ENCODE measurements at regions of chr2 and their contacts with region 1.

Region 1: DNA sequence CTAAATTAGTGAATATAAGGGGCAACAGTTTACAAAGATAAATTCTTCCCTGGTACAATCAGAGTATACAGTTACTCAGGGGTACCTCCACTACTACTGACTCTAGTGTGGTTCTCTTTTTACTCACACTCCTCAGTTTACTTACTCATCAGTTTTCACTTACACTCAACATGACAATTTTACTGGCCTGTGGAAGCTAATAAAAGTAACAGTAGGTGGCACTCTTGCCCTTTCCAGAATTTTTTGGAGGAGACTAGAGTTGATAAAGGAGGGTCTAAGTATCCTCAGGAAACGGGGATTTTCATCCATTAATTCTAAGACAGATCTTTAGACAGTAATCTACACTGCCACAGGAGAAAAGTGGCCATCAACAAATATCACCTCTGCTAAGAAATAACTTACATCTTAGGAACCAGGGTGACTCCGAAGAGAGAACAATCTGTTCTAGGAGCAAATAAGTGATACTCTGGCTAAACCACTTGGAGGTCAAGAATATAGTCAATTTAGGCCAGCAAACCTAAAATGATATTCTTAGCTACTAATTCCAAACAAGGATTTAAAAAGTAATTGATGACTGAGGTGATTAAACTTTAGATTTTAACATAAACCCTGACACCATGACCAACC is 61.3 kb downstream of the ATL2 start:
- H3K4me3 ChIP-seq: no peak overlapping the region
- H3K27ac ChIP-seq: no peak overlapping the region
- H3K4me1 ChIP-seq: peaks cover 3% of the 10 kb centered on the region; the same call in 1 of the 2 replicates
- CTCF ChIP-seq: no peak; the same call in 1 of the 2 replicates

Region 2: GRCh38 chr2:37877457-37878315 is 438.1 kb before region 1 on chr2:
- CTCF ChIA-PET with region 1: no interaction called
- POLR2A ChIA-PET with region 1: no interaction called
- H3K4me3 ChIP-seq: no peak overlapping the region
- H3K27ac ChIP-seq: no peak overlapping the region
- H3K4me1 ChIP-seq: no peaks in the 10 kb centered on the region
- CTCF ChIP-seq: peak; percentile 49

Region 3: DNA sequence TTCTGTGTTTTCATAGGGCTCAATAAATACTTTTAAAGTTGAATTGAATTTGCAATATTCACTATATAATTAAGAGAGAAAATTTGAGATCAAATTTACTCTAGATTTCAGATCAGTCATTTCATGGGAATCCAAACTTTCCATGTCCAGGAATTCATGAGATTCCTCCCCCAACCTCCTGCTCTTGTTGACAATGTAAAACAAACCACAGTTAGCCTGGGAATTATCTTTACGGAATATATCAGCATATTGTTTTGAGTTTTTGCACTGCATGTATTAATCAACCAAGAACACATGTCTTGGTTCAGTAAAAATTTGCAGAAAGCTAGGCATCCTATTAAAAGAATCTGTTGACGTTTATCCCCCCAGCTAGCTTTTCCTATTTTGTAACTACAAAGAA is 282.2 kb before region 1 on chr2:
- CTCF ChIA-PET with region 1: no interaction called
- POLR2A ChIA-PET with region 1: no interaction called
- H3K4me3 ChIP-seq: no peak overlapping the region
- H3K27ac ChIP-seq: no peak overlapping the region
- H3K4me1 ChIP-seq: no peaks in the 10 kb centered on the region; the same call in 1 of the 2 replicates
- CTCF ChIP-seq: no peak

Region 4: DNA sequence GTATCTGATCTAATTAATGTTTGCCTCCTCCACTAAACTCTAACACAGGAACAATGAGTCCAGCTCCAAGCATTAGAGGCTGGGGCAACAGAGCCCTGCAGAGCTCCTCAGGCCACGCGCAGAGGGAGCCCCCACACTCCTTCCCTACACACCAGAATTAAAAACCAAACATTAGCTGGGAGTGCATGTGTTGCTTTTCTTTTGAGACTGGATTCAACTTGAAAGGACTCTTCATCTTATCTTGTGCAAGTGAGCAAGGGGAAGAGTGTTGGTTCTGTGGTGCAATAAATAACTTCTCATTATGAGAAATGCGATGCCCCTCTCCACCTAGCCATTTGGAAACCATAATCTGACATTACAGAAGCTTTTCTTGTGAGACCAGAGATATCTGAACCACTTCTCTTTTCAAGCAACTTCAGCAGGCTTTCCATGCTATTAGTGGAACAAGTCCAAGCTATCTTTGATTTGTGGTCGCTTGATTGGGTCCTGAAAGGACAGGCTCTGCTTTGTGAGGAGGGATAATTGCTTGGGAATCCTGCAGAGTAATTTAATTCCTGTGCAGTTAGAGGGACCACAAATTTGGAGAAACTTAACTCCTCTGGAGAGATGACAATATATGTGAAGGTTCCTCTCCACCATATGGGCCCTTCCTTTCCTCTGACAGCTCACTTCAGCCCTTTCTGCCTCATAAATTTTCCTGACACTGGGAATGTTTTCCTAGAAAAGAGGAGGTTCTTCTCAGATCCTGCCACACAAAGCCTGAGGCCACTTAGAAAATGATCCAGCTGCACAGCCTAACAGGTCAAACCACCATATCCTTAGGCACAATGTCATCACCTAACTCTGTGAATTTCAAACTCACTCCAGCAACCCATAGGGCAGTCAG is 51.2 kb before region 1 on chr2:
- CTCF ChIA-PET with region 1: no interaction called
- POLR2A ChIA-PET with region 1: no interaction called
- H3K4me3 ChIP-seq: no peak overlapping the region
- H3K27ac ChIP-seq: peak overlapping the region; percentile 63
- H3K4me1 ChIP-seq: peaks cover 10% of the 10 kb centered on the region
- CTCF ChIP-seq: no peak

Region 5: DNA sequence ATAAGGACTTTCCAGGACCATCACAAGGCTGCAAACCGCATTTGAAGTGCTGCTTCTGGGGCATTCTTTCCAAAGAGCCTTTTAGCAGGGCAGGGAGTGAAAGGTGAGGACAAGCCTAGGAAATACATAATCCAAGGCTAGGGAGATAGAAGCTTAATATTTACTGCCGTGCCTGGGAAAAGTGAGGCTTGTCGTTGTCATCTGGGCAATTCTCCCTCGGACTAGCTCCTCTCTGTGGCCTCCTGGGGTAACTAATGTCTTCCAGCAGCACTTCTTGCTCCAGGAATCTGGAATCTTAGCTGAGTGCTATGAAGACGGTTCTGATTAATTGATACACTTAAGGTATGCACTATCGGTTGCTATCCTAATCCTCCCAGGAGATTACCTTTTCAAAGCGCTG is 130.6 kb after region 1 on chr2:
- CTCF ChIA-PET with region 1: interaction called, 12 read pairs
- POLR2A ChIA-PET with region 1: interaction called, 4 read pairs
- H3K4me3 ChIP-seq: no peak overlapping the region
- H3K27ac ChIP-seq: no peak overlapping the region
- H3K4me1 ChIP-seq: peaks cover 32% of the 10 kb centered on the region
- CTCF ChIP-seq: peak; percentile 10; the same call in 1 of the 2 replicates

Region 6: DNA sequence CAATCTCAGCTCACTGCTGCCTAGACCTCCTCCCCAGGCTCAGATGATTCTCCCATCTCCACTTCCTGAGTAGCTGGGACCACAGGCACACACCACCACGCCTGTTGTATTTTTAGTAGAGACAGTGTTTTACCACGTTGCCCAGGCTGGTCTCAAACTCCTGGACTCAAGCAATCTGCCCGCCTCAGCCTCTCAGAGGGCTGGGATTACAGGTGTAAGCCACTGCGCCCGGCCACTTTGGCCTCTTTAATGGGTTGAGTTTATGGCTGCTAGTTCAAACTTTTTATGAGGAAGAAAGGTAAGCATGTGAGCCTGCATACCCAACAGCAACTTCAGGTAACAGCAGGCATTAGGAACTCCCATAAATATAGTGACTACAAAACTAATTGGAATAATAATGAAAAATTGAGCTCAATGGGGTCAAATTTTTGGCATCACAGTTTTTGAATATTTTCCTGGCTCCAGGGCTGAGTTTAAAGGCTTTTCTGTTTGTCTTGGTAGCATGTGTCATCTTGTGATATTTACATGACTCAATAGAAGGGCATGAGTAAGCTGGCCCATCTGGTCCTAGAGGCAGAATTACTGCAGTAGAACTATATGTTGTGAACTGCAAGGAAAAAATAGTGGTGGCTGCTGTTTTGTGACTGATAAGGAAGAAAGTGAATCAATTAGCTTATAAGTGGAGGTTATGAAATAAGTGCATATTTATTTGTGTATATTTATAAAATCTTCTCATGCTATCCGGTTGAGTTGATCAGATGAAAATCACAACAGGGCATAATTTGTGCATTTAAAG is 374.9 kb after region 1 on chr2:
- CTCF ChIA-PET with region 1: no interaction called
- POLR2A ChIA-PET with region 1: no interaction called
- H3K4me3 ChIP-seq: no peak overlapping the region
- H3K27ac ChIP-seq: no peak overlapping the region
- H3K4me1 ChIP-seq: no peaks in the 10 kb centered on the region
- CTCF ChIP-seq: no peak

Measured in HEK293 (cell line).